Motor neuron (in vitro differentiated cells): ENCODE measurements at regions of chr18 and their contacts with region 1.

Region 1: DNA sequence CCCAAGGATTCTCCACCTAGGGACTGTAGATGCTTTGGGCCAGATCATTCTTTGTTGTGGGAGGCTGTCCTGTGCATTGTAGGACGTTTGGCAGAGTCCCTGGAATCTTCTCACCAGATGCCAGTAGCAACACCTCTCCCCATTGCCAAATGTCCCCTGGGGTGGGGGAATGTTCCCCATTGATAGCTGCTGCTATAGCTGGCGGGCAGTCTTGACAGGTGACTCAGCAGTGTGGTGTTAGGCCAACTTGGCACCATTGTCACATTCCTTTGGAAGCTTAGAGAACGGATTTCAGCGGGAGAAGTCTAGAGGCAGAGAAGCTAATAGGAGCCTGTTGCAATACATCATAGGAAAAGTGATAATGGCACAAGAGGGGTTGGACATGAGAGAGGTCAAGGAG is 495.7 kb upstream of the SMIM21 start:
- ATAC-seq: peak in 1 of 8 experiments; percentile 29
- H3K4me3 ChIP-seq: no peak overlapping the region
- H3K27ac ChIP-seq: no peak overlapping the region
- H3K4me1 ChIP-seq: no peaks in the 10 kb centered on the region

Region 2: GRCh38 chr18:76005632-76006208 is 82.6 kb after region 1 on chr18:
- in situ Hi-C with region 1: loop called in 1 of 9 experiments (anchors 25 kb)
- ATAC-seq: peak in 4 of 8 experiments; percentile 16 to 31 (median 22)
- H3K4me3 ChIP-seq: no peak overlapping the region
- H3K27ac ChIP-seq: no peak overlapping the region
- H3K4me1 ChIP-seq: no peaks in the 10 kb centered on the region